Breast epithelium (tissue), 4 donors: ENCODE measurements at regions of chr2 and their contacts with region 1.

Region 1: DNA sequence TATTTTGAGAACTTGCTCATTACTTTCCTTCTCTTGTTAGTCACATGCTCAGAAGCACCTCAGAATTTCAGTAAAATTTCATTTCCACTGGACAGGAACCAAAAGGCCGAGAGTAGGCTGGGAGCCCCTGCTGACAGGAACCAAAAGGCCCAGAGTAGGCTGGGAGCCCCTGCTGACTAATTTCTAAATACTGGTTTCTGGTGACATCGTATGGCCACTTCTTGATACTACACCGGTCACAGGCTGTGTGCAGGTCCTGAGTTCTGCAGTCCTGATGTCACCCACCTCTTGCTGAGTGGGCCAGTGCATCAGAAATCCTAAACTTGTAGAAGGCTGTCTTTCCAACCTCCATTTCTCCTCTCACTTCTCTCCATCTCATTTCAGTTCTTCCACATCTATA is 17.7 kb upstream of the EN1 start:
- DNase-seq: no peak
- H3K4me3 ChIP-seq: no peak overlapping the region
- H3K27ac ChIP-seq: no peak overlapping the region
- H3K4me1 ChIP-seq: no peaks in the 10 kb centered on the region
- H3K27me3 ChIP-seq: peaks cover 0 to 15% of the 10 kb centered on the region in 2 donors
- CTCF ChIP-seq: peak; percentile 14 to 58 (median 26)
- POLR2A ChIP-seq: no peak

Region 2: DNA sequence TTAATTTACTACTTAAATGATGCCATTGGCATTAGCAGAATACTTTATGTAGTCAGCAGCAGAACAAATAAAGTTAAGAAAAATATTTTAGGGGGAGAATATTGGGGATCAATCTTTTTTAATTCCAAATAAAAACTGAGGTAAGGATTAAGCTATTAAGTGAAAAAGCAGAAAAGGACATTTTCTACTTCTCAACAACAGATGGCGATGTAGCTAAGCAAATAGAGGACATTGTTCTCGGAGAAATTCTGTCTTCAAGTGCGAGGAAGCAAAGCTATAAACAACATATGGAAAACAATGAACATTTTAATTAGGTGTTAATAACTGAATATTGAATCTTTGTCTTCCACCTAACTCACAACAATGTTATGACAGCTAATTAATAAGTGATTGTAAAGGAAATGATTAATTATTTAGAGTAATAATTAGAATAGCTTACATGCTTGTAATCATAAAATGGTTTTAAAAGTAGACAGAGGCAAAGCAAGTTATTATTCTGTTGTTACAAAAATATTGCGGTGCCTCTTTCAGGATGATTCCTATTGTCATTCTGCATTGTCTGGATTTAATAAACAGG is 818.4 kb before region 1 on chr2:
- intact Hi-C with region 1: loop called (anchors 10 kb)
- DNase-seq: no peak
- H3K4me3 ChIP-seq: no peak overlapping the region
- H3K27ac ChIP-seq: no peak overlapping the region
- H3K4me1 ChIP-seq: no peaks in the 10 kb centered on the region
- H3K27me3 ChIP-seq: peaks cover 0 to 9% of the 10 kb centered on the region in 2 donors
- CTCF ChIP-seq: peak in 2 of 3 donors; percentile 58 to 62
- POLR2A ChIP-seq: no peak

Region 3: GRCh38 chr2:118221666-118222594 is 643.2 kb before region 1 on chr2:
- intact Hi-C with region 1: loop called (anchors 10 kb)
- DNase-seq: peak in 1 of 2 donors; percentile 24
- H3K4me3 ChIP-seq: no peak overlapping the region
- H3K27ac ChIP-seq: no peak overlapping the region
- H3K4me1 ChIP-seq: no peaks in the 10 kb centered on the region
- H3K27me3 ChIP-seq: peaks cover 4 to 70% of the 10 kb centered on the region in 2 donors
- CTCF ChIP-seq: peak; percentile 59 to 76 (median 67)
- POLR2A ChIP-seq: no peak

Region 4: DNA sequence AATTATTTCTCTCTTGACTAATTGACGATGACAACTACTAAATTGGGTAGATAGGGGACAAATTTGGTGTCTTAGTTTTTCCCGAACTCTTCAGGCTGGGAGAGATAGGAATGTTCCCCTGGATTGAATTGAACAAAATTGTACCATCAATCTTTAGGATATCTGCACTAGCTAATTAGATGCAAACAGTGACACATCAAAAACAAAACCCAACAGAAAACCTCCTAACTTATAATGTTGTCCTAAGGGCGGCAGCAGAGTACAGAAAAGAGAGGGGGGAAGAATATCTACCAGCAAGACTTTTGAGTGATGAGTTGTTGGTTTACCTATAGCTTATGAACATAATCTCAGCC is 434.0 kb before region 1 on chr2:
- intact Hi-C with region 1: no loop called
- DNase-seq: no peak
- H3K4me3 ChIP-seq: no peak overlapping the region
- H3K27ac ChIP-seq: no peak overlapping the region
- H3K4me1 ChIP-seq: no peaks in the 10 kb centered on the region
- H3K27me3 ChIP-seq: no peaks in the 10 kb centered on the region
- CTCF ChIP-seq: no peak
- POLR2A ChIP-seq: no peak